ENCODE measurements at regions of chr6 and their contacts with region 1.

Region 1: DNA sequence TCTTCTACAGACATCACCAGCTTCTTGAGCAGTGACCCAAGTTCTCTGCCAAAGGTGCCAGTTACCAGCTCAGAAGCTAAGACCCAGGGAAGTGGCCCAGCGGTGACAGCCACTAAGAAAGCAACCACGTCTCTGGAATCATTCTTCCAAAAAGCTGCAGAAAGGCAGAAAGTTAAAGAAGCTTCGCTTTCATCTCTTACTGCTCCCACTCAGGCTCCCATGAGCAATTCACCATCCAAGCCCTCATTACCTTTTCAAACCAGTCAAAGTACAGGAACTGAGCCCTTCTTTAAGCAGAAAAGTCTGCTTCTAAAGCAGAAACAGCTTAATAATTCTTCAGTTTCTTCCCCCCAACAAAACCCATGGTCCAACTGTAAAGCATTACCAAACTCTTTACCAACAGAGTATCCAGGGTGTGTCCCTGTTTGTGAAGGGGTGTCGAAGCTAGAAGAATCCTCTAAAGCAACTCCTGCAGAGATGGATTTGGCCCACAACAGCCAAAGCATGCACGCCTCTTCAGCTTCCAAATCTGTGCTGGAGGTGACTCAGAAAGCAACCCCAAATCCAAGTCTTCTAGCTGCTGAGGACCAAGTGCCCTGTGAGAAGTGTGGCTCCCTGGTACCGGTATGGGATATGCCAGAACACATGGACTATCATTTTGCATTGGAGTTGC is 15.2 kb downstream of the GTPBP2 start:
- DNase-seq: no peak
- H3K4me3 ChIP-seq: no peak overlapping the region
- H3K27ac ChIP-seq: no peak overlapping the region
- H3K4me1 ChIP-seq: no peaks in the 10 kb centered on the region
- H3K27me3 ChIP-seq: no peaks in the 10 kb centered on the region
- CTCF ChIP-seq: no peak

Region 2: GRCh38 chr6:43644931-43645612 is 31.2 kb after region 1 on chr6 and contains the start of gene RSPH9:
- CTCF ChIA-PET with region 1: no interaction called
- dilution Hi-C with region 1: loop called (anchors 5 kb)
- in situ Hi-C with region 1: no loop called
- intact Hi-C with region 1: no loop called
- DNase-seq: no peak
- H3K4me3 ChIP-seq: peak within 1 kb of the TSS in 2 of 3 experiments; percentile 1 to 12
- H3K27ac ChIP-seq: no peak within 1 kb of the TSS
- H3K4me1 ChIP-seq: no peaks in the 10 kb centered on the region
- H3K27me3 ChIP-seq: no peaks in the 10 kb centered on the region
- CTCF ChIP-seq: no peak
- total RNA-seq, gene RSPH9: 0.50 TPM in 1 of 2 donors, not detected in the other